GM13976 (cell line): ENCODE measurements at regions of chr5 and their contacts with region 1.

Region 1: DNA sequence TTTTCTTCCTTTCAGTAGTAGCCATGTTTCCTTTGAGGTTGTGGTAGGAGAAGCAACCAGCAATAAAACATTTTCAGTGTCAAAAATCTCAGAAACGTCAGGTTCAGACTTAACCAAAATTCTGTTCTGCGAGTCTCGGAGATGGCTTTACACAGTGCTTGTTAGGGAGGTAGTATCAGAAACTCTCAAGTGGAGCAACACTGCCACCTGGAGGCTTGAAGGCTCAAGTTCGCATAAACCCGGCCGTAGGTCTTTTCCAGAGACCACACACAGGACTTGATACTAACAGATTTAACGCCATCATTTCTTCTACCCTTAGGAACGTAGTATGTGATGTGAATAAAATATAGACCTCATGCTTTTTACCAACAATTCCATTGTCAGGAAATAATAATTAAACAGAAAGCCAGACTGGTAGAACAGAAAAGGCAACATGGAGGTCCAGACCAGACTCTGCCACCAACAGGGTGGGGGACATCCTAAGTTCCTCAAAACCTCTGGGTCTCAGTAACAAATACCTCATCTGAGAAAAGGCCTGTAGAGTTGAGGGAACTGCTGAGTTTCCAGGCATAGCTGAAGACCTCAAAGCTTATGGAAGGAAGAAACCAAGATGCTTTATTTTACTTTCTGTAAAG is 8.5 kb downstream of the PTGER4 start:
- DNase-seq: peak; percentile 65
- CTCF ChIP-seq: peak; percentile 72

Region 2: GRCh38 chr5:39599721-39600431 is 1088.4 kb before region 1 on chr5:
- in situ Hi-C with region 1: loop called (anchors 25 kb)
- DNase-seq: no peak
- CTCF ChIP-seq: no peak

Region 3: DNA sequence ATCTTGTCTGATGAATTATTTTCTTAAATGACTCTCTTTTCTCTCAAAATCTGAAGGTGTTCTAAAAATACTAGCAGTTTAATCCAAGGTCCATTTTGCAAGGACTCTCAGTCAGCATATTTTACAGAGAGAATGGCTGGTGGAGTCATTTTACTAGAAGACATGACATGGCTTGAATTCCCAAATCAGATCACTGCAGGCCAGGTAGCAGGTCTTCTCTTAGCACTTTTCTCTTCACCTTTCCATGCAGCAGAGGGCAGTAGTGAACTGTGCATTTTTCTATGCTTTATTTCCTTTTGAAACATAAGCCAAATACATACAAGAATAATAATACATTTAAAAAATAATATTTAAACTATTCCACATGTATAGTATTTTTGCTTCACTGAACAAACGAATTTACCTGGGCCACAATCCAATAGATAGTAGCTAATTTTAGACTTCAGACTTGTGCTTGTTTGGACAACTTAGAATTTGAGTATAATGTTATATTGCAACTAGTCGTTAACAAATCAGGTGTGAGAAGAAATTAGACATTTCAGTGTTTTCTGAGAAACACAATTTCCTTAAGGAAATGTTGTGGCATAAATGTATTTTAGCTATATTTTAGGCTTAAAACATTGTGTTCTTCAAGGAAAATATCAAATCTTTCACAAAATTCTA is 974.1 kb before region 1 on chr5:
- in situ Hi-C with region 1: loop called (anchors 25 kb)
- DNase-seq: peak; percentile 24
- CTCF ChIP-seq: peak; percentile 46

Region 4: GRCh38 chr5:40198736-40199135 is 489.5 kb before region 1 on chr5:
- in situ Hi-C with region 1: no loop called
- DNase-seq: no peak
- CTCF ChIP-seq: no peak

Region 5: GRCh38 chr5:40233268-40233667 is 455.0 kb before region 1 on chr5:
- in situ Hi-C with region 1: no loop called
- DNase-seq: no peak
- CTCF ChIP-seq: no peak